Activated naive CD4-positive, alpha-beta T cell treated with anti-CD3 and anti-CD28 coated beads for 36 hours (primary cell): ENCODE measurements at regions of chr15 and their contacts with region 1.

Region 1: DNA sequence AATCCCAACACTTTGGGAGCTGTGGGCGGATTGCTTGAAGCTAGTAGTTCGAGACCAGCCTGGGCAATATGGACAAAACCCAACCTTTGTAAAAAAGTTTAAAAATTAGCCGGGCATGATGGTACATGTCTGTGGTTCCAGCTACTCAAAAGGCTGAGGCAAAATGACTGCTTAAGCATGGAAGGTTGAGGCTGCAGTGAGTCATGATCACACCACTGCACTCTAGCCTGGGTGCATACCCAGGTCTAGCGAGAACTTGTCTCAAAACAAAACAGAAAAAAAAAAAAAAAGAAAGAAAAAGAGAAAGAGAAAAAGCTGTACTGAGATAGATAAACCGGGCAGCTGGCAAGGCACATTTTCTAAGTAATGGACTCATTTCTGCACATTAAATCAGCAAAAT is 10.6 kb downstream of the ARPP19 start:
- DNase-seq: peak; percentile 82
- H3K4me3 Mint-ChIP-seq: peak overlapping the region; percentile 24
- H3K27ac Mint-ChIP-seq: peak overlapping the region; percentile 89
- H3K4me1 Mint-ChIP-seq: peaks cover 55% of the 10 kb centered on the region
- H3K27me3 Mint-ChIP-seq: no peaks in the 10 kb centered on the region

Region 2: GRCh38 chr15:52005748-52006701 is 552.2 kb before region 1 on chr15:
- CTCF ChIA-PET with region 1: no interaction called
- intact Hi-C with region 1: loop called (anchors 2 kb)
- DNase-seq: peak; percentile 58
- H3K4me3 Mint-ChIP-seq: no peak overlapping the region
- H3K27ac Mint-ChIP-seq: peak overlapping the region; percentile 30
- H3K4me1 Mint-ChIP-seq: peaks cover 50% of the 10 kb centered on the region
- H3K27me3 Mint-ChIP-seq: peaks cover 6% of the 10 kb centered on the region

Region 3: GRCh38 chr15:52295421-52296001 is 262.7 kb before region 1 on chr15 and contains the start of gene MYO5C:
- CTCF ChIA-PET with region 1: no interaction called
- intact Hi-C with region 1: no loop called
- DNase-seq: peak; percentile 19
- H3K4me3 Mint-ChIP-seq: peak within 1 kb of the TSS; percentile 27
- H3K27ac Mint-ChIP-seq: no peak within 1 kb of the TSS
- H3K4me1 Mint-ChIP-seq: no peaks in the 10 kb centered on the region
- H3K27me3 Mint-ChIP-seq: peaks cover 26% of the 10 kb centered on the region
- total RNA-seq, gene MYO5C: 0.19 to 0.25 TPM

Region 4: DNA sequence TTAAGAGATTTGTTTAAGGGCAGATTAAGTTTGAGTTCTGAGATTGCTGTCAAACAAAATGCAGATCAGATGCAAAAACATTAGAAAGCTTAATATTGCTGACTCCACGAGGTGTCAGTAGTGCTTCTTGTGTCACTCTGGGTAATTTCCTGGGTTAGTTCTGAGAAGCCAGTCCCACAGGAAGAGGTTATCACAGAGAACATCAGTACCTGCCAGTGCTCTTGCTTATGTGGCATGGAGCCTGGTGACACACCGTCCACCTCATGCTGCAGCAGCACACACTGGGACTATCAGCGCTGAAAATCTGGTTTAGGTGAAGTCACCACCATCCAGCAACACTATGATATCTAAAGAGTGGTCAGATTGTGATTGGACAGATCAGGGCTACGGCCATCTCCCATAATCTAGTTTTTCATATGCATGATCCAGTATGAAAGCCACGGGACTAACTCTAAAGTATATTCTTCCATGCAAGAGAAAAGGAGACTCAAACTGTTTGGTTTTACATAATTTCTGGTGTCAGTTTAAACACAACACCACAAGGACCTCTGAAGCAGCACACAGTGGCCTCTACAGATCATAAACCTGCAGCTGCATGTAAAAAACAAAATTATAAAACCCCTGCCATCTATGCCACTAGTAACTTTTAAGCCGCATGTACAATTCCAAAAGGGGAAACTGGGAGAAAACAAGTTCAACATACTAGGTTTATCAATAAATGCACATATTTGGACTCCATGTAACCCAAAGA is 226.5 kb before region 1 on chr15:
- CTCF ChIA-PET with region 1: interaction called, 4 read pairs
- intact Hi-C with region 1: loop called (anchors 2 kb)
- DNase-seq: peak; percentile 76
- H3K4me3 Mint-ChIP-seq: no peak overlapping the region
- H3K27ac Mint-ChIP-seq: peak overlapping the region; percentile 7
- H3K4me1 Mint-ChIP-seq: peaks cover 11% of the 10 kb centered on the region
- H3K27me3 Mint-ChIP-seq: no peaks in the 10 kb centered on the region

Region 5: GRCh38 chr15:52496776-52497470 is 61.3 kb before region 1 on chr15:
- CTCF ChIA-PET with region 1: no interaction called
- intact Hi-C with region 1: loop called (anchors 2 kb)
- DNase-seq: peak; percentile 79
- H3K4me3 Mint-ChIP-seq: no peak overlapping the region
- H3K27ac Mint-ChIP-seq: no peak overlapping the region
- H3K4me1 Mint-ChIP-seq: peaks cover 13% of the 10 kb centered on the region
- H3K27me3 Mint-ChIP-seq: no peaks in the 10 kb centered on the region

Region 6: DNA sequence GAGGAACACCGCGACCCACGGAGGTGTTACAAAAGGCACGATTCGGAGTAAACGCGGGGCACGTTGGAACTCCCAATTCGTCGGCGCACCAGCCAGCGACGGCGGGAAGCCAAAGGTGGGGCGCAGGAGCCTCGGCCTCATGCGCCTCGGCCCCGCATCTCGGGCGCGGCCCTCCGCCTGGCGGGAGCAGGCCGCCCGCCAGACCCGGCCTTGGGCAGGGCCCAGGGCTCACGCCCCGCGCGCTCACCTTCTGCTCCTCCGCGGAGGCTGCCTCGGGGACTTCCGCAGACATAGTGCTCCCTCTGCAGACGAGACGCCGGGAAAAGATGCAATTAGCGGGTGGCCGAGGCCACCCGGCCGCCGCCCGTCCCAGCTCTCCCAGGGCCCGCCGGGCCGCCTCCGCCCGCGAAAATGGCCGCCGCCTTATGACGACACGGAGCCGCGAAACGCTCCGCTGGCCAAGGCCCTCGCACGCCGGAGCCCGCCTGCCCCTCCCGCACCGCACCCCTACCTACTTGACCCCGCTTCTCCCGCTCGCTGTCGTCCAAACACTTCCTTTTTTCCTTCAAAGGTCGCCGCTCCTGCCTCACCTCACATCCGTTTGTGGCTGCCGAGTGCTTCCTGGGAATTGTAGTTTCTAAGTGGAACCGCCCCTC is 10.5 kb after region 1 on chr15 and contains the start of gene ARPP19:
- CTCF ChIA-PET with region 1: no interaction called
- intact Hi-C with region 1: loop called (anchors 1 kb)
- DNase-seq: peak; percentile 90
- H3K4me3 Mint-ChIP-seq: peak within 1 kb of the TSS; percentile 86
- H3K27ac Mint-ChIP-seq: peak within 1 kb of the TSS; percentile 98
- H3K4me1 Mint-ChIP-seq: peaks cover 23% of the 10 kb centered on the region
- H3K27me3 Mint-ChIP-seq: no peaks in the 10 kb centered on the region
- total RNA-seq, gene ARPP19: 130 to 144 TPM

Region 7: GRCh38 chr15:52679232-52680040 is 121.2 kb after region 1 on chr15 and contains the start of gene ATOSA:
- CTCF ChIA-PET with region 1: interaction called, 3 read pairs
- intact Hi-C with region 1: loop called (anchors 1 kb)
- DNase-seq: peak; percentile 93
- H3K4me3 Mint-ChIP-seq: peak within 1 kb of the TSS; percentile 100
- H3K27ac Mint-ChIP-seq: peak within 1 kb of the TSS; percentile 98
- H3K4me1 Mint-ChIP-seq: peaks cover 39% of the 10 kb centered on the region
- H3K27me3 Mint-ChIP-seq: no peaks in the 10 kb centered on the region
- total RNA-seq, gene ATOSA: 19.4 to 21.7 TPM